ENCODE measurements at regions of chr20 and their contacts with region 1.

Region 1: GRCh38 chr20:297098-297924 is at the start of gene ZCCHC3:
- DNase-seq: peak; percentile 83 to 84 (median 83)
- H3K4me3 ChIP-seq: peak within 1 kb of the TSS; percentile 67 to 94
- H3K4me3 Mint-ChIP-seq: peak within 1 kb of the TSS; percentile 98 to 100 (median 99)
- H3K27ac ChIP-seq: peak within 1 kb of the TSS; percentile 85
- H3K27ac Mint-ChIP-seq: peak within 1 kb of the TSS; percentile 97 to 99 (median 99)
- H3K4me1 ChIP-seq: peaks cover 33% of the 10 kb centered on the region
- H3K4me1 Mint-ChIP-seq: peaks cover 30 to 56% (median 37%) of the 10 kb centered on the region in 4 donors
- H3K27me3 ChIP-seq: no peaks in the 10 kb centered on the region
- H3K27me3 Mint-ChIP-seq: no peaks in the 10 kb centered on the region
- total RNA-seq, gene ZCCHC3: 27.9 to 29.8 TPM

Region 2: DNA sequence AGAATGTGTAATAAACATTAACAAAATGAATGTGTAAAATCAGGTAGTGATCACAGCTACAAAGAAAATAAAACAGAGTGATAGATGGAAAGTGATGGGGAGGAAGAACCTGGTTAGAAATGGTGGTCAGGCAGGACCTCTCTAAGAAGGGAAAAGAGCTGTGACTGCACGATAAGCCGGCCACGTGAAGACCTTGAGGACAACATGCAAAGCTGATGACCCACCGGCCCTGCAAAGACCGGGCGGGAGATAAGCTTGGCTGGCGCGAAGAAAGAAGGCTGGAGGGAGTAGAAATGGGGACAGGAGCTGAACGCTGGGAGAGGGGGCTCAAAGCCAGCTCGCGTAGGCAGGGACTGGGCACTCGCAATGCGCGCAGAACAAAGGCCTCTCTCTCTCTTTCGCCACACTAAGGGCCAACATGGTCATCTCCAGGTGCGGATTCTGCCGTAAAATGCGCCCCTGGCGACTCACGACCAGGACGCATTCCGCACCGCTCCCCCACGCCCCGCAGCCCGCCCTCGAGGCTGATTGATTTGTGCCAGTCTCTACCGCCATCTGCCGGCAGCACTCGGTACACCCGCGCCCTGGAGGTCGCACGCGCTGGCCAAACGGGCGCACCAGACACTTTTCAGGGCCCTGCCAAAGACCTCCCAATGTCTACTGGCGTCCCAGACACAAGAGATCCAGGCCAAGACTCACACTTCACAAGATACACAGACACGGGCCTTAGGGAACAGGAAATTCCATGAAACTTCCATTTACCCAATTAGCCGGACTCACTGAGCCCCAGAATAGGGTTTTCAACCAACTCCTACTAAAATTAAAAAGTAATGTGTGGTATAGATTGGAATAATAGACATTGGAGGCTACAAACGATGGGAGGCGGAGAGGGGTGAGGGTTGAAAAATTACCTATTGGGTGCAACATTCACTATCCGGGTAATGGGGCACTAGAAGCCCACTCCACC is 30.4 kb before region 1 on chr20:
- CTCF ChIA-PET with region 1: interaction called, 12 read pairs
- POLR2A ChIA-PET with region 1: interaction called, 5 read pairs
- intact Hi-C with region 1: no loop called
- DNase-seq: peak; percentile 82 to 87 (median 83)
- H3K4me3 ChIP-seq: peak overlapping the region in 1 of 2 donors; percentile 60
- H3K4me3 Mint-ChIP-seq: peak overlapping the region; percentile 80 to 87 (median 84)
- H3K27ac ChIP-seq: no peak overlapping the region
- H3K27ac Mint-ChIP-seq: peak overlapping the region in 4 of 7 donors; percentile 52 to 72 (median 64)
- H3K4me1 ChIP-seq: peaks cover 7% of the 10 kb centered on the region
- H3K4me1 Mint-ChIP-seq: peaks cover 7 to 11% (median 9%) of the 10 kb centered on the region in 4 donors
- H3K27me3 ChIP-seq: no peaks in the 10 kb centered on the region
- H3K27me3 Mint-ChIP-seq: peaks cover 3 to 21% of the 10 kb centered on the region in 2 donors

Region 3: GRCh38 chr20:309841-310644 is 12.7 kb after region 1 on chr20:
- CTCF ChIA-PET with region 1: no interaction called
- POLR2A ChIA-PET with region 1: interaction called, 11 read pairs
- intact Hi-C with region 1: no loop called
- DNase-seq: peak; percentile 56 to 74 (median 59)
- H3K4me3 ChIP-seq: no peak overlapping the region
- H3K4me3 Mint-ChIP-seq: peak overlapping the region; percentile 49 to 78 (median 68)
- H3K27ac ChIP-seq: no peak overlapping the region
- H3K27ac Mint-ChIP-seq: peak overlapping the region in 5 of 7 donors; percentile 36 to 80 (median 49)
- H3K4me1 ChIP-seq: peaks cover 12% of the 10 kb centered on the region
- H3K4me1 Mint-ChIP-seq: peaks cover 10 to 12% (median 10%) of the 10 kb centered on the region in 4 donors
- H3K27me3 ChIP-seq: no peaks in the 10 kb centered on the region
- H3K27me3 Mint-ChIP-seq: peaks cover 0 to 1% of the 10 kb centered on the region in 2 donors

Region 4: GRCh38 chr20:324177-325044 is 27.1 kb after region 1 on chr20:
- CTCF ChIA-PET with region 1: interaction called, 18 read pairs
- POLR2A ChIA-PET with region 1: interaction called, 112 read pairs
- intact Hi-C with region 1: loop called (anchors 1 kb)
- DNase-seq: peak; percentile 83 to 87 (median 84)
- H3K4me3 ChIP-seq: peak overlapping the region; percentile 79 to 96
- H3K4me3 Mint-ChIP-seq: peak overlapping the region; percentile 90 to 95 (median 92)
- H3K27ac ChIP-seq: peak overlapping the region; percentile 45
- H3K27ac Mint-ChIP-seq: peak overlapping the region; percentile 88 to 96 (median 92)
- H3K4me1 ChIP-seq: peaks cover 25% of the 10 kb centered on the region
- H3K4me1 Mint-ChIP-seq: peaks cover 3 to 22% (median 14%) of the 10 kb centered on the region in 4 donors
- H3K27me3 ChIP-seq: no peaks in the 10 kb centered on the region
- H3K27me3 Mint-ChIP-seq: no peaks in the 10 kb centered on the region

Region 5: GRCh38 chr20:391041-391711 is 93.9 kb after region 1 on chr20:
- CTCF ChIA-PET with region 1: no interaction called
- POLR2A ChIA-PET with region 1: no interaction called
- intact Hi-C with region 1: no loop called
- DNase-seq: no peak
- H3K4me3 ChIP-seq: no peak overlapping the region
- H3K4me3 Mint-ChIP-seq: no peak overlapping the region
- H3K27ac ChIP-seq: no peak overlapping the region
- H3K27ac Mint-ChIP-seq: peak overlapping the region in 1 of 7 donors; percentile 68
- H3K4me1 ChIP-seq: no peaks in the 10 kb centered on the region
- H3K4me1 Mint-ChIP-seq: peaks cover 0 to 2% (median 0%) of the 10 kb centered on the region in 4 donors
- H3K27me3 ChIP-seq: no peaks in the 10 kb centered on the region
- H3K27me3 Mint-ChIP-seq: no peaks in the 10 kb centered on the region

Region 6: GRCh38 chr20:543369-544152 is 246.2 kb after region 1 on chr20 and contains the start of gene CSNK2A1:
- CTCF ChIA-PET with region 1: no interaction called
- POLR2A ChIA-PET with region 1: interaction called, 8 read pairs
- intact Hi-C with region 1: loop called (anchors 5 kb)
- DNase-seq: peak; percentile 94 to 99 (median 97)
- H3K4me3 ChIP-seq: peak within 1 kb of the TSS; percentile 45 to 93
- H3K4me3 Mint-ChIP-seq: peak within 1 kb of the TSS; percentile 85 to 100 (median 92)
- H3K27ac ChIP-seq: peak within 1 kb of the TSS; percentile 80
- H3K27ac Mint-ChIP-seq: peak within 1 kb of the TSS; percentile 98 to 100 (median 99)
- H3K4me1 ChIP-seq: peaks cover 50% of the 10 kb centered on the region
- H3K4me1 Mint-ChIP-seq: peaks cover 28 to 56% (median 43%) of the 10 kb centered on the region in 4 donors
- H3K27me3 ChIP-seq: no peaks in the 10 kb centered on the region
- H3K27me3 Mint-ChIP-seq: peaks cover 0 to 5% of the 10 kb centered on the region in 2 donors
- total RNA-seq, gene CSNK2A1: 81.6 to 87.8 TPM